ENCODE measurements at regions of chr6 and their contacts with region 1.

Region 1: DNA sequence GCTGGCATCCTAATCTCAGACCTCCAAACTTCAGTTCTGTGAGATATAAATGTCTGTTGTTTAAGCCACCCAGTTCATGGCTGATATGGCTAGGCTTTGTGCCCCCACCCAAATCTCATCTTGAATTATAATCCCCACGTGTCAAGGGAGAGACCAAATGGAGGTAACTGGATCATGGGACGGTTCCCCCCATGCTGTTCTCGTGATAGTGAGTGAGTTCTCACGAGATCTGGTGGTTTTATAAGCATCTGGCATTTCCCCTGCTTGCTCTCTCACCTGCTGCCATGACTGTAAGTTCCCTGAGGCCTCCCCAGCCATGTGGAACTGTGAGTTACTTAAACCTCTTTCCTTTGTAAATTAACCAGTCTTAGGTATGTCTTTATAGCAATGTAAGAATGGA is 56.7 kb downstream of the KIAA0319 start:
- DNase-seq: no peak
- H3K4me3 ChIP-seq: no peak overlapping the region
- H3K27ac ChIP-seq: no peak overlapping the region
- H3K4me1 ChIP-seq: no peaks in the 10 kb centered on the region
- H3K27me3 ChIP-seq: no peaks in the 10 kb centered on the region
- CTCF ChIP-seq: no peak
- POLR2A ChIP-seq: no peak

Region 2: GRCh38 chr6:24554485-24554884 is 34.8 kb before region 1 on chr6:
- intact Hi-C with region 1: no loop called
- DNase-seq: no peak
- H3K4me3 ChIP-seq: no peak overlapping the region
- H3K27ac ChIP-seq: no peak overlapping the region
- H3K4me1 ChIP-seq: no peaks in the 10 kb centered on the region
- H3K27me3 ChIP-seq: no peaks in the 10 kb centered on the region
- CTCF ChIP-seq: no peak
- POLR2A ChIP-seq: no peak

Region 3: GRCh38 chr6:24689964-24690363 is 100.6 kb after region 1 on chr6:
- intact Hi-C with region 1: loop called (anchors 5 kb)
- DNase-seq: no peak
- H3K4me3 ChIP-seq: no peak overlapping the region
- H3K27ac ChIP-seq: no peak overlapping the region
- H3K4me1 ChIP-seq: no peaks in the 10 kb centered on the region
- H3K27me3 ChIP-seq: no peaks in the 10 kb centered on the region
- CTCF ChIP-seq: no peak
- POLR2A ChIP-seq: no peak

Measured in uterus (tissue), 4 donors.